T-cell (primary cell): ENCODE measurements at regions of chr10 and their contacts with region 1.

Region 1: GRCh38 chr10:85635650-85636049 is 730.9 kb downstream of the GRID1 start:
- DNase-seq: no peak
- ATAC-seq: no peak
- H3K4me3 ChIP-seq: no peak overlapping the region
- H3K4me3 Mint-ChIP-seq: no peak overlapping the region
- H3K27ac ChIP-seq: no peak overlapping the region
- H3K27ac Mint-ChIP-seq: no peak overlapping the region
- H3K4me1 ChIP-seq: peaks cover 0 to 2% of the 10 kb centered on the region in 2 experiments
- H3K4me1 Mint-ChIP-seq: peaks cover 12 to 14% (median 13%) of the 10 kb centered on the region in 3 donors
- H3K27me3 ChIP-seq: no peaks in the 10 kb centered on the region
- H3K27me3 Mint-ChIP-seq: no peaks in the 10 kb centered on the region

Region 2: GRCh38 chr10:85622425-85622824 is 13.2 kb before region 1 on chr10:
- CTCF ChIA-PET with region 1: no interaction called
- POLR2A ChIA-PET with region 1: interaction called in 1 of 2 experiments, 20 read pairs
- DNase-seq: no peak
- ATAC-seq: no peak
- H3K4me3 ChIP-seq: no peak overlapping the region
- H3K4me3 Mint-ChIP-seq: no peak overlapping the region
- H3K27ac ChIP-seq: no peak overlapping the region
- H3K27ac Mint-ChIP-seq: no peak overlapping the region
- H3K4me1 ChIP-seq: no peaks in the 10 kb centered on the region
- H3K4me1 Mint-ChIP-seq: peaks cover 0 to 13% (median 2%) of the 10 kb centered on the region in 3 donors
- H3K27me3 ChIP-seq: peaks cover 0 to 5% of the 10 kb centered on the region in 2 experiments
- H3K27me3 Mint-ChIP-seq: peaks cover 0 to 1% of the 10 kb centered on the region in 2 donors